K562 (cell line): ENCODE measurements at regions of chr2 and their contacts with region 1.

Region 1: GRCh38 chr2:99489761-99490622 is at the start of gene REV1:
- DNase-seq: peak; percentile 96 to 97 (median 96)
- ATAC-seq: peak; percentile 89
- H3K4me3 ChIP-seq: peak within 1 kb of the TSS; percentile 62
- H3K27ac ChIP-seq: peak within 1 kb of the TSS; percentile 90
- H3K4me1 ChIP-seq: peaks cover 10 to 12% of the 10 kb centered on the region in 2 experiments
- H3K27me3 ChIP-seq: no peaks in the 10 kb centered on the region
- CTCF ChIP-seq: peak; percentile 78 to 85 (median 84)
- EP300 ChIP-seq: no peak
- POLR2A ChIP-seq: no peak; the same call in 1 of the 2 replicates
- RAD21 ChIP-seq: peak; percentile 80 to 81
- polyA plus RNA-seq, gene REV1: 12.8 to 13.1 TPM

Region 2: DNA sequence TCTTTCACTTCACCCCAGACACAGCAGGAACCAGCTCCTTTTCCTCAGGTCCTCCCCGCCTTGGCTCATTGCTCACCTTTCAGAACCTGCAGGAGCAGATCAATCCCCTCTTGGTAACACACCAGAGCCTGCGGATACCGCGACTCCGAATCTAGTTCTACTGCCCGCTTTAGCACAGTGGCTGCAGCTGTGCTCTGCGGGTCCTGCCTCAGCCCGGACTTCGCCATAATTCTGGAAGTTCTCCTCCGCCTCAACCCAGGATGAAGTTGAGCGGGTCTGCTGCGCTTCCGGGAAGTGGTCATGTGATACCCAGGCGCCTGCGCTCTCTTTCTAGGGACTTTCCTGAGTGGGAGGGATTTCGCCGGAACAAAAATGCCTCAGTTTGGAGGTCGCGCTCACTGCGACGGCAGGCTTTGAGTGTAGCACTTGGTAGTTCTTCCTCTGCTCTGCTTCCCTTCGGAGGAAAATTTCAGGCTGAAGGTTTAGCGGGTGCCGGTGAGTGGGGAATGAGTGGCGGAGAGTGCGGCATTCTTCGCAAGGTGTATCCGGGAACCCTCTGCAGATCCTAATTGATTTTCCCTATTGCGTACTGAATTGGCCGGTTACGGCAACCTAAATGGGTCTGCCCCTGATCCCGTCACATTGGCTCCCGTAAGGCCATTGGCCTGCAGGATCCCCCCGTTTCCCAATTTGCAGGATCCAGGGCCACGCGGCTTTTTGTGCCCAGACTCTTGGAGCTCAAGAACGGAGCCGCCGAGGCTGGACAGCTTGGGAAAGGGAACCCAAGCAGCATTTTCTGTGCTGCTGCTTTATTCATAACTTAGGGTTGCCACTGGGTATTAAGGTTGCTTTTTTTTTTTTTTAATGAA is 309.0 kb before region 1 on chr2 and contains the starts of genes MITD1 and MRPL30:
- CTCF ChIA-PET with region 1: no interaction called
- POLR2A ChIA-PET with region 1: no interaction called
- in situ Hi-C with region 1: no loop called
- intact Hi-C with region 1: loop called (anchors 2 kb)
- DNase-seq: peak; percentile 82 to 97 (median 86)
- ATAC-seq: peak; percentile 92
- H3K4me3 ChIP-seq: peak within 1 kb of the TSS; percentile 72
- H3K27ac ChIP-seq: peak within 1 kb of the TSS; percentile 88
- H3K4me1 ChIP-seq: peaks cover 0 to 14% of the 10 kb centered on the region in 2 experiments
- H3K27me3 ChIP-seq: no peaks in the 10 kb centered on the region
- CTCF ChIP-seq: peak in 1 of 3 experiments; percentile 13; a peak in 1 of 6 replicates
- EP300 ChIP-seq: peak; percentile 50; the same call in 1 of the 2 replicates
- POLR2A ChIP-seq: peak; percentile 93
- RAD21 ChIP-seq: no peak
- polyA plus RNA-seq, gene MITD1: 62.3 to 71.8 TPM
- polyA plus RNA-seq, gene MRPL30: 63.3 to 130 TPM

Region 3: DNA sequence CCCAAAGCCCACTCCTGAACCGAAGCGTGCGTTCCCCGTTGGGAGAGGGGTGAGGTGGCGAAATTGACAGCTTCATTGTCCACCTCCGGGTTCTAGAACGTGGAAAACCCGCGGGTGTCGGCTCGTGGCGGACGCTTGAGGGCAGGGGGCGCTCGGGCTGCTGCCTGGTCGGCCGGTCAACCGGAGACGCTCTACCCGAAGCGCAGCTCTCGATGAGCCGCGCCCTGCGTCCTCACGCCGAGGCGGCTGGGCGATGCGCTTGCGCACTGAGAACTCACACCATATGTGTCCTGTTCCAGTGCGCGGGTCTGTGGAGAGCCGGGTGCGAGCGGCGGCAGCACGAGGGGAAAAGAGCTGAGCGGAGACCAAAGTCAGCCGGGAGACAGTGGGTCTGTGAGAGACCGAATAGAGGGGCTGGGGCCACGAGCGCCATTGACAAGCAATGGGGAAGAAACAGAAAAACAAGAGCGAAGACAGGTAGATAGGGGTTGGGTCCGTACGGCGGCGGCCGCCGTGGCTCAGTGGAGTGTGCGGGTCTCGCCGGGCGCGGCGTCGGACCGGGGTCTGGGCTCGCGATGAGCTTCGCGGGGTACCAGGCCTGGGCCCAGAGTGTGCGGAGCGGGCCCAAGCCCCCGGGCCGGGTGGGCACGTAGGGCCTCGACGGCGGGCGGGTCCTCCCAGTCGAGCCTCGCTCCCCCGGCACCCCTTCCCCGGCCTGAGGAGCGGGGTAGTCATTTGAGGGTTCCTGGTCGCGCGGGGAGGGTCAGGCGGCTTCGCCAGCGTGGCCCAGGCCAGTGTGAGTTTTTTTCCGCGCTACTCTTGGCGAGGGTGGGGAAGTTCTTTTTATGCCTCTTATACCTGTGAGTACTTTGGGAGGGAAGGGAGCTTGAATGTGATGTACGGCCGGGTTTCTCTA is 152.6 kb before region 1 on chr2 and contains the start of gene EIF5B:
- CTCF ChIA-PET with region 1: interaction called, 9 read pairs
- POLR2A ChIA-PET with region 1: interaction called, 3 read pairs
- in situ Hi-C with region 1: no loop called
- intact Hi-C with region 1: loop called (anchors 1 kb)
- DNase-seq: peak; percentile 86 to 99 (median 90)
- ATAC-seq: peak; percentile 89
- H3K4me3 ChIP-seq: peak within 1 kb of the TSS; percentile 61
- H3K27ac ChIP-seq: peak within 1 kb of the TSS; percentile 92
- H3K4me1 ChIP-seq: peaks cover 11 to 19% of the 10 kb centered on the region in 2 experiments; a peak in 4 of 5 replicates
- H3K27me3 ChIP-seq: no peaks in the 10 kb centered on the region
- CTCF ChIP-seq: peak; percentile 77 to 83 (median 80)
- EP300 ChIP-seq: peak; percentile 52; the same call in 1 of the 2 replicates
- POLR2A ChIP-seq: peak; percentile 96
- RAD21 ChIP-seq: peak; percentile 11 to 14; a peak in 1 of 4 replicates
- polyA plus RNA-seq, gene EIF5B: 26.5 to 33.2 TPM

Region 4: DNA sequence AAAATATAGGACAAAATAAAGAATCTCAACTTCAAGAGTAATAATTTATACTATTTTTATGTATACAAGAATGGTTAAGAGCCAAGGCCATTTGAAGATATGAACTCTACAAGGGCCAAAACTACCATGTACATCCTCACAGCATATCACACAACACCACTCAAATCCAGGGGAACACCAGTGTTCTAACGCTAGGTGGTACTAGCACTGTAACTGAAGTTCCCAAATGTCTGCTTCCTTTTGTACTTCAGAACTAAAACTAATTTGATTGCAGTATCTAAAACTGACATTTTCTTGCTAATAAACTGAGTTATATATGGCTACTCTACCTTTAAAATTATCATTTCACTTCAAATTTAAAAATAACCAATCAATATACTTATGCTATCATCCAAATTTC is 47.2 kb before region 1 on chr2:
- CTCF ChIA-PET with region 1: interaction called, 8 read pairs
- POLR2A ChIA-PET with region 1: no interaction called
- in situ Hi-C with region 1: no loop called
- intact Hi-C with region 1: loop called (anchors 2 kb)
- DNase-seq: peak in 2 of 4 experiments; percentile 11 to 24
- ATAC-seq: peak; percentile 69; the same call in 2 of the 3 replicates
- H3K4me3 ChIP-seq: no peak overlapping the region
- H3K27ac ChIP-seq: no peak overlapping the region
- H3K4me1 ChIP-seq: no peaks in the 10 kb centered on the region
- H3K27me3 ChIP-seq: no peaks in the 10 kb centered on the region
- CTCF ChIP-seq: peak in 2 of 3 experiments; percentile 12 to 40; a peak in 3 of 6 replicates
- EP300 ChIP-seq: no peak
- POLR2A ChIP-seq: no peak
- RAD21 ChIP-seq: peak; percentile 47 to 48

Region 5: DNA sequence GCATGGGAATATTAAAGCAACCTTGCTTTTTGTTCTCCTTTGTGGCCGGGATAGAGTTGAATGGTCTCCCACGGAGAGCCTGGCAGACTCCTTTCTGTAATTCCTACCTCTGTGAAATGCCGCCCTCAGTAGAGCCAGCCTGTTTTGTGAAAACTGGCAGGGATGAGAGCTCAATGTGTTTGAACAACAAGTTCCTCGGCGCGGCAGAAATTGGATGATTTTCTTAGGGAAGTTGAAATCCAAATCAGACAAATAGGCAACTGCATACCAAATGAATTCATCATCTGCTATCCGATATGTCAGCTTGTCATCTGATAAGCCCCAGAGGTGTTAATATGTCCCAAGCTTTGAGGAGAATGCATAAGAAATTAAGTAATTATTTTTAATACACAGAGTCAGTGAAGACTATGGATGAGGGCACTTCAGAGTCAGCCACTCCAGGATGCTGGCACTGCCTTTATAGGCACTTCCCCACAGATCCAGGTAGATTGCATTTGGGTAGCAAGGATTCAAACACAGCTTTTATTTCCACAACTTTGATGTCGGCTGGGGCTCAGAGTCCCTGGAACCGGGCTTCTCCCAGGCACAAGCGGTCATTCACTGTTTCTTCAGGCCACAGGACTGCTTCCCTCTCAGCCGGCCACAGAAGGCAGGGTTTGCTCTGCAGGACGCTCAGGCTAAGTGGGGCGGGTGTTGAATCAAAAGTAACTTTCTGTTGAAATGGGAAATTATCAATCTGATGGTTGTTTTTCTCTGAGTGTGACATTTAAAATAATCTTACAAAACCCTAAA is 82.6 kb after region 1 on chr2:
- CTCF ChIA-PET with region 1: no interaction called
- POLR2A ChIA-PET with region 1: no interaction called
- in situ Hi-C with region 1: no loop called
- intact Hi-C with region 1: no loop called
- DNase-seq: no peak
- ATAC-seq: no peak
- H3K4me3 ChIP-seq: no peak overlapping the region
- H3K27ac ChIP-seq: no peak overlapping the region
- H3K4me1 ChIP-seq: no peaks in the 10 kb centered on the region
- H3K27me3 ChIP-seq: peaks cover 39 to 52% of the 10 kb centered on the region in 2 experiments
- CTCF ChIP-seq: no peak
- EP300 ChIP-seq: no peak
- POLR2A ChIP-seq: no peak
- RAD21 ChIP-seq: no peak